Heart right ventricle (tissue), 16 donors: ENCODE measurements at regions of chr14 and their contacts with region 1.

Region 1: DNA sequence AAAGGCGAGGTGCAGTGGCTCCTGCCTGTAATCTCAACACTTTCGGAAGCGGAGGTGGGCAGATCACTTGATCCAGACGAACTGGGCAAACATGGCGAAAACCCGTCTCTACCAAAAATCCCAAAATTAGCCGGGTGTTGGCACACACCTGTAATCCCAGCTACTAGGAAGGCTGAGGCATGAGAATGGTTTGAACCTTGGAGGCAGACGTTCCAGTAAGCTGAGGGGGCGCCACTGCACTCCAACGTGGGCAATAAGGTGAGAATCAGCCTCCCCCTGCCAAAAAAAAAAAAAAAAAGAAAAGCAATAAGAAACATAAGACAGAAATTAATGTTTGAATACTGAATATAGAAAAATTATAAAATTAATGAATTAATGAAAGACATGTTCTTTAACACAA is 928.7 kb downstream of the LRFN5 start:
- DNase-seq: no peak
- ATAC-seq: no peak
- H3K4me3 ChIP-seq: no peak overlapping the region
- H3K27ac ChIP-seq: no peak overlapping the region
- H3K4me1 ChIP-seq: no peaks in the 10 kb centered on the region
- H3K27me3 ChIP-seq: no peaks in the 10 kb centered on the region
- CTCF ChIP-seq: no peak

Region 2: DNA sequence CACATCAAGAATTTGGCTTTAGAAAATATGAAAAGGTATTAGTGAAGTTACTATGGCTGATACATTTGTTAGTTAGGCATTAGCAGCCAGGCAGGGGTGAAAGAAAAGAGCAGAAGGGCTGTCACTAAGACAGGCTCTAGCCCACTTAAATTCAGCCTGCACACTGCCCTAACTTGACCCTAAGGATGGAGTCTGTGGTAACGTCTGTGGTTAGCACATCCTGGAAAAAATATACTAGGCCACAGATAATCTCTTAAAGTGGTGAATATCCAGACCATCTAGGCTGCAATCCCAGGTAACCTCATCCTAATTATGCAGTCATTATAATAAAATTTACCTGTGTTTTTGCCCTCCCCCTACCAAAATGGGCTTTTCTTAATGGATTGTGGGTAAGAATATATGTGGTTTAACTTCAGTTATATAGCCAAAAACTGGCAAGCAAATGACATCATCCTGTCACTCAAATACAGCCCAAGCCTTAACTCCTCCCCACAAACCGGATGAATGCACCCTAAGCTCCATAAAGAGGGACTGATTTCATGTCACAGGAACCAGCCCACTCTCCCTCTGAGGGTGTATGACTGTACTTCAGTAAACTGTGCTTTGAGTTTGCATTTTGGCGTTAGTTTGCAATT is 487.9 kb before region 1 on chr14:
- intact Hi-C with region 1: loop called in 1 of 10 experiments (anchors 5 kb)
- DNase-seq: no peak
- ATAC-seq: no peak
- H3K4me3 ChIP-seq: no peak overlapping the region
- H3K27ac ChIP-seq: no peak overlapping the region
- H3K4me1 ChIP-seq: no peaks in the 10 kb centered on the region
- H3K27me3 ChIP-seq: no peaks in the 10 kb centered on the region
- CTCF ChIP-seq: no peak

Region 3: GRCh38 chr14:42563313-42563712 is 27.9 kb after region 1 on chr14:
- intact Hi-C with region 1: no loop called
- DNase-seq: no peak
- ATAC-seq: no peak
- H3K4me3 ChIP-seq: no peak overlapping the region
- H3K27ac ChIP-seq: no peak overlapping the region
- H3K4me1 ChIP-seq: no peaks in the 10 kb centered on the region
- H3K27me3 ChIP-seq: no peaks in the 10 kb centered on the region
- CTCF ChIP-seq: no peak